Right cardiac atrium (tissue), 5 donors: ENCODE measurements at regions of chr15 and their contacts with region 1.

Region 1: DNA sequence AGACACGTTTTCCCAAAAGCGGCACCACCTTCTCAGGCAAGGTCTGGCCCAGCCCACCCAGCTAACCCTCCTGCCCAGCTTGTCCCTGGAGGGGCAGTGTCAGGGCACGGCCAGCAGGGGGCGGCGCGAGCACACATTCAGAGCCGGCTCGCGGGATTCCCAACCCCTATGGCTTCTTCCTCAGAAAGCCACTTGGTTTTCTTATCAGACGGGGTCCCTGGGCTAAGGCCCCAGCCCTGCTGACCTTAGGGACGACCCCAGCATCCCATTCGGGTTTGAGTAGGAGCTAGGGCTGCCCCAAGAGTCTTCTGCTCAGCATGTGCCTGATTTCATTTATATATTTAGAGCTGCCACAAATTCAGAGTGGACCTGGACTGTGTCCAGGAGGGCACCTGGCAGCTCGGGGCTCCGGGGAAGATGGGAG is 14.5 kb downstream of the RLBP1 start:
- DNase-seq: peak; percentile 73 to 90 (median 88)
- ATAC-seq: peak; percentile 84 to 87
- H3K4me3 ChIP-seq: no peak overlapping the region
- H3K27ac ChIP-seq: no peak overlapping the region
- H3K4me1 ChIP-seq: no peaks in the 10 kb centered on the region
- H3K27me3 ChIP-seq: no peaks in the 10 kb centered on the region

Region 2: DNA sequence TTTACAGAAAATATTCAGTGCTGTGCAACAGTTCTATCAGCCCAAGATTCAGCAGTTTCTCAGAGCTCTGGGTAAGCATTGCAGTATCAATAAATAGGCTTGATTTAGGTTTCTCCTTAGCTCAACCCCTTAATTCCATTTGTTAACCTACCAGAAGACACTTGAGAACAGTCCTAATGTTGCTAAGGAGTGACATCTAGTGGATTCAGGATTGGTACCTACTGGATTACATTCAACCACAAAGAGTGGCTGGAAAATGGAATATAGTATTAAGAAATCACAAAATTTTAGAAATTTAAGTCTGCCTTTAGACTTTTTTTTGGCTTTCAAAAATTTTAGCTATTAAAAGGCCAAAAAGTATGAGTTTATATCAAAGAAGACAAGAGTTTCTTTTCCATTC is 93.0 kb after region 1 on chr15:
- intact Hi-C with region 1: loop called in 1 of 4 experiments (anchors 10 kb)
- DNase-seq: no peak
- ATAC-seq: no peak
- H3K4me3 ChIP-seq: no peak overlapping the region
- H3K27ac ChIP-seq: no peak overlapping the region
- H3K4me1 ChIP-seq: no peaks in the 10 kb centered on the region
- H3K27me3 ChIP-seq: no peaks in the 10 kb centered on the region